ENCODE measurements at regions of chr9 and their contacts with region 1.

Region 1: GRCh38 chr9:111743275-111743674 is 51.5 kb downstream of the SHOC1 start:
- DNase-seq: peak; percentile 93
- H3K4me3 ChIP-seq: no peak overlapping the region
- H3K27ac ChIP-seq: peak overlapping the region; percentile 97
- H3K4me1 ChIP-seq: peaks cover 26% of the 10 kb centered on the region
- H3K27me3 ChIP-seq: no peaks in the 10 kb centered on the region
- CTCF ChIP-seq: no peak

Region 2: DNA sequence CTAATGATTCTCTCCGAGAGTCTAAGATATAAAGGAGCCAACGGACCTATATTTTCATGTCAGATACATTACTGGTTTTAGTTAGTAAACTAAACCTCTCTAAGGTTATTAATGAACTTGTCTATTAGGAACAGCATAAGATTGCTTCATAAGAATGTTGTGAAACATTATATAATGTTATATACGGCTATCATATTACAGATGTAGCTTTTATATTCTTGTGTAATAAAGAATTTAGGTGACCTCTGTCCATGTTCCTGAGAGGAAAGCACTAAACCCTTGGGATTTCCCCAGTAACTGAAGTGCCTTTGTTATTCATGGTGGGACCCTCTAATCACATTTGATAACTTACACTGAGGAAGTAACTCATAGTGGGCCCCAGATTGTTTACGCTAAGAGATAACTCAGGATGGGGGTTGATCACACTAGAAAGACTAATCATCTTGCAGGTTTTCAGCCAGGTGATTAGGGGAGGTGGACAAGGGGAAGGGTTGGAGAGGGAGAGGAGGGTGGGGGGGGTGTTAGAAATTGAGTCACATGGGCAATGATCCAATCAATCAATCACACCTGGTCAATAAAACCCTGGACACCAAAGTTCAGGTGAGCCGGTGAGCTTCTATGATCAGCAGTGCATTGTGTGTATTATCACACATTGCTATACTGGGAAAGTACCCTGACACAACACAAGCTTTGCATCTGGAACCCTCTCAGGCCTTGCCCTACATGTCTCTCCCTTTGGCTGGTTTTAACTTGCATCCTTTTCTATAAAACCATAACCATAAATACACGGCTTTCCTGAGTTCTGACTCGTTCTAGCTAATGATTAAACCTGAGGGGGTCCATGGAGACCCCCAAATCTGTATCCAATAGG is 284.9 kb before region 1 on chr9:
- CTCF ChIA-PET with region 1: no interaction called
- dilution Hi-C with region 1: no loop called
- in situ Hi-C with region 1: no loop called
- intact Hi-C with region 1: no loop called
- DNase-seq: no peak
- H3K4me3 ChIP-seq: no peak overlapping the region
- H3K27ac ChIP-seq: no peak overlapping the region
- H3K4me1 ChIP-seq: no peaks in the 10 kb centered on the region
- H3K27me3 ChIP-seq: no peaks in the 10 kb centered on the region
- CTCF ChIP-seq: no peak

Region 3: GRCh38 chr9:111715471-111715870 is 27.8 kb before region 1 on chr9:
- CTCF ChIA-PET with region 1: no interaction called
- dilution Hi-C with region 1: no loop called
- in situ Hi-C with region 1: no loop called
- intact Hi-C with region 1: no loop called
- DNase-seq: no peak
- H3K4me3 ChIP-seq: no peak overlapping the region
- H3K27ac ChIP-seq: no peak overlapping the region
- H3K4me1 ChIP-seq: no peaks in the 10 kb centered on the region
- H3K27me3 ChIP-seq: no peaks in the 10 kb centered on the region
- CTCF ChIP-seq: no peak

Region 4: DNA sequence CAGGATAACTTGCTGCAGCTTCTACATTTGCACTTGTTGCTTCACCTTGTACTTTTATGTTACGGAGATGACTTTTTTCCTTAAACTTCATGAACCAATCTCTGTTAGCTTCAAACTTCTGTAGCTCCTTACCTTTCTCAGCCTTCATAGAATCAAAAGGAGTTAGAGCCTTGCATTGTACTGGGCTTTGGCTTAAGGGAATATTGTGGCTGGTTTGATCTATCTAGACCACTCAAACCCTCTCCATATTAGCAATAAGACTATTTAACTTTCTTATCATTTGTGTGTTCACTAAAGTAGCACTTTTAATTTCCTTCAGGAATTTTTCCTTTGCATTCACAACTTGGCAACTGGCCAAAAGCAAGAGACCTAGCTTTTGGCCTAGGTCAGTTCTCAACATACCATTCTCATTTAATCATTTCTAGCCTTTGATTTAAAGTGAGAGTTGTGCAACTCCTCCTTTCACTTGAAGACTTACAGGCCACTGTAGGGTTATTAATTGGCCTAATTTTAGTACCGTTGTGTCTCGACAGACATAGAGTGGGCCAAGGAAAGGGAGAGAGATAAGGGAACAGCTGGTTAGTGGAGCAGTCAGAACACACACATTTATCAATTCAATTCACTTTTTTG is 12.2 kb before region 1 on chr9:
- CTCF ChIA-PET with region 1: no interaction called
- dilution Hi-C with region 1: no loop called
- in situ Hi-C with region 1: no loop called
- intact Hi-C with region 1: loop called (anchors 1 kb)
- DNase-seq: peak; percentile 71
- H3K4me3 ChIP-seq: no peak overlapping the region
- H3K27ac ChIP-seq: peak overlapping the region; percentile 0
- H3K4me1 ChIP-seq: peaks cover 30% of the 10 kb centered on the region
- H3K27me3 ChIP-seq: no peaks in the 10 kb centered on the region
- CTCF ChIP-seq: no peak

Region 5: DNA sequence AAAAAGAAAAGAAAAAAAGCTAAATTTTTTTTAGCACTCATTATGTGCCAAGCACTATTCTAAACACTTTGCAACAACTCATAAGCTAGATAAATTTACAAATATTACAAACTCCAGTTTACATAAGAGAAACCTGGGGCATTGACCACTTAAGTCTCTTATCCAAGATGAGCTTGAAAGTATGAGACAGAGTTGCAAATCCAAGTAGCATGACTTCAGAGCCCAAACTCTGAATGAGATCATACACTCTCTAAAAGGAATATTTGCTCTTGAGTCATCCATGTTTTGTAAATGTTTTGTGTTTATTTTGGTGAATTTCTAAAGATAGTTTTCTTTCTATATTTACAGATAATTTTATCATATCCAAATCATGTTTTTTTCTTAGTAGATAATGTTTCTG is 55.5 kb after region 1 on chr9:
- CTCF ChIA-PET with region 1: interaction called, 24 read pairs
- dilution Hi-C with region 1: no loop called
- in situ Hi-C with region 1: no loop called
- intact Hi-C with region 1: no loop called
- DNase-seq: peak; percentile 38
- H3K4me3 ChIP-seq: no peak overlapping the region
- H3K27ac ChIP-seq: no peak overlapping the region
- H3K4me1 ChIP-seq: no peaks in the 10 kb centered on the region
- H3K27me3 ChIP-seq: no peaks in the 10 kb centered on the region
- CTCF ChIP-seq: no peak

Region 6: GRCh38 chr9:111873901-111874300 is 130.6 kb after region 1 on chr9:
- CTCF ChIA-PET with region 1: no interaction called
- dilution Hi-C with region 1: no loop called
- in situ Hi-C with region 1: no loop called
- intact Hi-C with region 1: no loop called
- DNase-seq: no peak
- H3K4me3 ChIP-seq: no peak overlapping the region
- H3K27ac ChIP-seq: peak overlapping the region; percentile 61
- H3K4me1 ChIP-seq: peaks cover 26% of the 10 kb centered on the region
- H3K27me3 ChIP-seq: no peaks in the 10 kb centered on the region
- CTCF ChIP-seq: no peak

Region 7: DNA sequence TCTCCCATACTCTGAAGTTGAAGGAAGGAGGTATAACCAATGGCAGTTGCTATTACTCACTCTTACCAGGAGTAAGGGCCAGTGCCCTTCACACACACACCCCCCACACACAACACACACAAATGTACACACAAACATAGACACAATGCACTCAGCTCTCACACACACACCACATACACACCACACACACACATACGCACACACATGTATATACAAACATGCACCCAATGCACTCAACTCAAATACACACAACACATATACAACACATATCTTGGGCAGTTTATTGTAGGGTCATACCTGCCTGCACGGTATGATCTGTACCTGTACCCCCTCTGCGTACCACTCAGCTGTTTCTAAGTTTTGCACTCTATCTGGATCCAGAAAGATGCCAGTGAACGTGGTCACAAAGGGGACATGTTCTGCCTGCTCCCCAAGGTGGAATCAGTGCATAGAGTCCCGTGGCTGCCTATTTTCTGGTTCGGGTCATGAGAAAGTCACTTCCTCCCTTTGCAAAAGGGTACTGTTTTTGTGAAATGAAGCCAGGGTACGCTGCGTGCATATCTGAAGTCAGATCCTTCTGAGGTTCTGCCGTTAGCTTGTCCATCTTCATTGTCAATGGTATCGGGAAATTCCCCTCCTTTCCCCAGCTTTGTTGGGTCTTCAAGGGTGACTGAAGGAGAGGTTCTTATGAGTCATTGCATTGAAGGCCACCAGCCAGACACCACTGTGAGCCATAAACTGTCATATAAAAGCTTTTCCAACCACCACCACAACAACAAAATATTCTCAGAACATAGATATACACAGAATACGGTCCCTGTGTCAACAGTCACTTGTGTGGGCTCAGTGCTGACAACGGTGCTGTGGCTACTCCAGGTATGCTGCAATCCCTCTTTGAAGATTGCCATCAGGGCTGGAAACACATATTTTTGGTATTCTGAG is 285.3 kb after region 1 on chr9:
- CTCF ChIA-PET with region 1: no interaction called
- dilution Hi-C with region 1: no loop called
- in situ Hi-C with region 1: no loop called
- intact Hi-C with region 1: no loop called
- DNase-seq: no peak
- H3K4me3 ChIP-seq: no peak overlapping the region
- H3K27ac ChIP-seq: peak overlapping the region; percentile 82
- H3K4me1 ChIP-seq: peaks cover 12% of the 10 kb centered on the region
- H3K27me3 ChIP-seq: no peaks in the 10 kb centered on the region
- CTCF ChIP-seq: no peak

Measured in mammary epithelial cell (primary cell).